ENCODE measurements at regions of chr16 and their contacts with region 1.

Region 1: DNA sequence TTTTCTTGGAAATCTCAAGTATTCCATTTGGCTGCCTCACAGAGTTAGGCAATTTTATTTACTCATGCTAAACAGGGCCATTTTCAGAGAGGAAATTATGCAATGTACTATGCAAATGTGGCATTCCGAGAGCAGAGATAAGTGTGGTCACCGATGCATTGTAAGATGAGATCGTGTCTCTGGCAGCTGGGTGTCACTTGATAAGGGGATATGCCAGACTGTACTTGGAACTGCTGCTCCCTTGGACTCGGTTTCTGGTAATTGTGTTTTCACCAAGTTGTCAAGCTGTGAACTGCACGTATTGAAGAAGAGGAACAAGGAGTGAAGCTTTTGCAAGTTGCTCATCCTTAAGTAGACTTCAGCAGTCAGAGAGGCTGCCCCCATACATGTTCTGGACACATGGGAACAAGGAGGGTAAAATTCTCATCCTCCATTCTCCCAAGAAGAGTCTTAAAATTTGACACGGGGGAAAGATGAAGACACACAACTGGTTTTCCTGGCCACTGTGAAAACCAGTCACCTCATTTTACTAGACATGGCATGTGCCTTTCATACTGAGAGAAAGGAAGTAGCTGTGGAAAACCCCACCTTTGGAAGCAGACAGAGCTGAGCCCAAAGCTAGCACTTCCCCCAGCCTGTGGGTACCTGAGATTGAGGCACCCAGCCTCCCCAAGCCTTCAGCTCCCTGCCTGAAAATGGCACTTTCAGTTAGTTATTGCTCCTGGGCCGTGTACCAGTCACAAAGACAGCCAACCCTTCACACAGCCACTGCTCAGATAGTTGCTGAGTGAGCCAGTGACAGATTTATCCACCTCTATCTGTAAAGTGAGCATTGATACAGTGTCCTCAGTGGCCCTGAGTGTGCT is 150.7 kb downstream of the SOCS1 start:
- DNase-seq: peak; percentile 95
- H3K4me3 ChIP-seq: no peak overlapping the region
- H3K27ac ChIP-seq: peak overlapping the region; percentile 59
- H3K4me1 ChIP-seq: peaks cover 30% of the 10 kb centered on the region
- H3K27me3 ChIP-seq: no peaks in the 10 kb centered on the region
- CTCF ChIP-seq: no peak

Region 2: DNA sequence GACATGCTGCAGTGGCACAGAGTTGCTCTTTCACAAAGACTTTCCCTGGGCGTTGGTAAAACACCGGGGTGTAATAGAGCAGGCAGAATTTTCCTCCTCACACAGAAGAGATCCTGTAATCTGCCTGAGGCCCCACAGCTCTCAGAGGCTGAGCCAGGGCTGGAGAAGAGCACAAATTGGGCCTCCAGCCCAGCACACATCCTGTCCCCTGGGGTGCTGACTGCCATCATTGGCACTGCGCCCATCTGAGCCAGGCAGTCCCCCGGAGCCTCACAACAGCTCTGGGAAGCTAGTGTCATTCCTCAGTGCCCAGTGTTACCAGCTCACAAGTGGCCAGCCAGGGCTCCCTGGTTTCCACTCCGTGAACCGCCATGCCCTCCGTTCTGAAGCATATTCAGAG is 31.3 kb after region 1 on chr16:
- CTCF ChIA-PET with region 1: no interaction called
- POLR2A ChIA-PET with region 1: no interaction called
- intact Hi-C with region 1: loop called (anchors 1 kb)
- DNase-seq: peak; percentile 98
- H3K4me3 ChIP-seq: no peak overlapping the region
- H3K27ac ChIP-seq: peak overlapping the region; percentile 74
- H3K4me1 ChIP-seq: peaks cover 66% of the 10 kb centered on the region
- H3K27me3 ChIP-seq: no peaks in the 10 kb centered on the region
- CTCF ChIP-seq: no peak